AG04449 (cell line): ENCODE measurements at regions of chr16 and their contacts with region 1.

Region 1: DNA sequence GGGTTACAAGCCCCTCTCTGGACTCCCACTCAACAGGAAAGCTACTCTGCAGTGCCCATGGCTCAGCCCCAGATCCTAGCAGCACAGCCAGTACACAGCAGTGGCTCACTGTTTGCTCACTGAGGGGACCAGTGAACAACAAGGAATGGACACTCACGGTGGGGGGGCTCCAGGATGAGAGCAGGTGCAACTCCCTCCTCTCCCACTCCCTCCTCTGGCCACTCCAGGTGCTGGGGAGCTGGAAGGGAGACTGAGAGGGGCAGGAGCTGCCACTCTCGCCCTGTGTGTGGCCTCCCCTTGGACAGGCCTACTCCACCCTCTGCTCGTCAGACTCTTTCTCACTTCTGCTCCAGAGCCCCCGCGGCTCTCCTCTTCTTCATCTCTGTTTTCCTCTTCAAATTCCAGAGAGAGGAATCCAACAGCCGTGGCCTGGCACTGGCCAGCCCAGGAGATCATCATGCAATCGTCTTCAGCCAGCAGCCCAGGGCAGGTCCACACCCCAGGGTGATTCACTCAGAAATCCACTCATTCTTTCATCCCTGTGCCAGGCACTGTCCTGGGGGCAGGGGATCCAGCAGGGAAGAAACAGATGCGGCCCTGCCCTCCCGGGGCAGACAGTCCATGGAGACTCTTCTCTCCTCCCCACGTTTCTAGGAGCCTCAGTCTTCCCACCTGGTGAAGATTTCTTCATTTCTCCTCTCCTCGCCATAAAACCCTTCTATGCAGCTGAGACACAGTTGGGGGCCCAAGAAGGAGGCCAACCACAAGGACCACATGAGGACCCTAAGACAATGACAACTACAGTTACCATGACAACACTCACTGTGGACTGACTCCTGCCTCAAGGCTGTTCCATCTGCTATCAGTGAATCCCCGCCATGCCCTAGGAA is 30.7 kb downstream of the CFAP20 start:
- DNase-seq: no peak
- H3K4me3 ChIP-seq: no peak overlapping the region
- CTCF ChIP-seq: no peak

Region 2: DNA sequence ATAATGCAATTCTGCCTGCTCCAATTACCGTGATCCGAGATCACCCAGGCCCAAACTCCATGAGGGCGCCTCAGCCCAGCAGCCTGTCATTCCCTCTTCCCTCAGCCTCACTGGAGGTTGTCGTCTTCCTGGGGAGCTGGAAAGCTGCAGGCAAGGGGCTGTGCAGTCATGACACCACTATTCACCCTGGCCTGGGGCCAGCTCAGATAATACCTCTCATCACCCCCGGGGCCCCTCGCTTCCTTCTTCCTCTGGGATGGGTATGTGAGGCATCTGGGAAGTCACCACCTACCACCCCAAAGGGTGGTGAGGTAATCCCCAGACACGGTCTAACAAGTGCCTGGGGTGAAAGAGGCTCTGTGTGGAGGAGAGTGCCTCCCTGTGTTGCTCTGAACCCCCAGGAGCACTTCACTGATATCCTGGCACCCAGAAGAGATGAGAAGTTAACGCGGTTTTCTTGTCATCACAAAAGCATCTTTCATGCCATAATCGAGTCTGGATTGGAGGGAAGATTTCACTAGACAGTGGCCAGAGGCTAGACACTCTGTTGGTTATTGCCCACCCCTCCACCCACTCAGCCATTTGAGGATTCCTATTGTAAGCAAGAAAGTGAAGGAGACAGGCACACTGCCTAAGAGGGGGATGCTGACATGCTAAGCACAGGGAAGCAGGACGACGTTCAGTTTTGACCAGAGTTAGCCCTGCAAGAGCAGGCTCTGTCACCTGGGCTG is 12.3 kb after region 1 on chr16:
- CTCF ChIA-PET with region 1: interaction called, 10 read pairs
- POLR2A ChIA-PET with region 1: no interaction called
- DNase-seq: no peak
- H3K4me3 ChIP-seq: no peak overlapping the region
- CTCF ChIP-seq: no peak